Ovary (tissue), 10 donors: ENCODE measurements at regions of chr7 and their contacts with region 1.

Region 1: DNA sequence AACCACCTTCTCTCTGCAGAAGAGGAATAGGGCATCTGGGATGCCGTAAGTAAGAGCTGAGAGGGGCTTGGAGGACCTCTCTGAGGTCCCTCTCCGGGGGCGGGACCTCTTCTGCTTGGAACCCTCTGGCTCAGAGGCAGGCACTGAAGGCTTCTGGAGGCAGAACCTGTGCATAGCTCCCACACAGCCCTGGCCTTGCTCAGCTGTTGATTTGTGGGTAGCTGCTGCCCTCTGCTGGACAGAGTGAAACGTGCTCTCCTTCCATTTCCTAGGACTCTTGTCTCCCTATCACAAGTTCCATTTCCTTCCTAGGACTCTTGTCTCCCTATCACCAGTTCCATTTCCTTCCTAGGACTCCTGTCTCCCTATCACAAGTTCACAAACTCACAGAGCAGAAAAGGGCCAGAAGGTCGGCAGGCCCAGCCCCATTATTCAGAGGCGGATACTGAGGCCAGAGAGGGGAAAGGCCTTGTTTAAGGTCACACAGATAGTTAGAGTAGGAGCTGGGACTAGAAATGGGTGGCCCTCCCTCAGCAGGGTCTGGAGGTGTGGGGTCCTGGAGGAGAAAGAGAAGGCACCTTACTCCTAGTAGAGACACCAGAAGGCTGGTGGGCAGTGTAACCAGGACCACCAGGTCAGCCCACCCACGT is 30.3 kb upstream of the GARS1 start:
- DNase-seq: peak; percentile 74 to 88 (median 86)
- H3K4me3 ChIP-seq: no peak overlapping the region
- H3K27ac ChIP-seq: no peak overlapping the region
- H3K4me1 ChIP-seq: no peaks in the 10 kb centered on the region
- H3K27me3 ChIP-seq: no peaks in the 10 kb centered on the region
- CTCF ChIP-seq: peak; percentile 68 to 83 (median 78)
- EP300 ChIP-seq: no peak
- POLR2A ChIP-seq: no peak

Region 2: GRCh38 chr7:30270921-30271320 is 293.4 kb before region 1 on chr7:
- intact Hi-C with region 1: loop called (anchors 5 kb)
- DNase-seq: no peak
- H3K4me3 ChIP-seq: no peak overlapping the region
- H3K27ac ChIP-seq: no peak overlapping the region
- H3K4me1 ChIP-seq: no peaks in the 10 kb centered on the region
- H3K27me3 ChIP-seq: no peaks in the 10 kb centered on the region
- CTCF ChIP-seq: no peak
- EP300 ChIP-seq: no peak
- POLR2A ChIP-seq: no peak

Region 3: DNA sequence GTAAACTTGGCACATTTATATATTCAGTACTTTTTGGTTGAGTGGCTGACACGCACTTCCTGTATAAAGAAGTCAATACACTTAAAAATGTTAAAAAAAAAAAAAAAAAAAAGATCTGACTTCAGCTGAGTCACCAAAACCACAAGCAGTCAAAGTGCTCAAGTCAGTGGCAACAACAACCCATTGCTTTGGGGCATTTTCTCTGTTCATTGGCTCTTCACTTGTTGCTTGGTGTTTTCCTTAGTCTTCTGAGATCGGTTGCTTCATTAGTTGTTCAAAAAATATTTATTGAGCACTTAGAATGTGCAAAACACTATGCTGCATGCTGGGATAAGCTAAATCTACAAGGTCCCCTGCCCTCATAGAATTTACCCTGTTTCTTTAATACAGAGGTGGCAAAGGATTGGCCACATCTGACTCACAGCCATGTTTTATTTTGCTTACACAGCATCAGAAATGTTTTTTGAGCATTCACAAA is 216.2 kb before region 1 on chr7:
- intact Hi-C with region 1: no loop called
- DNase-seq: no peak
- H3K4me3 ChIP-seq: no peak overlapping the region
- H3K27ac ChIP-seq: no peak overlapping the region
- H3K4me1 ChIP-seq: no peaks in the 10 kb centered on the region
- H3K27me3 ChIP-seq: no peaks in the 10 kb centered on the region
- CTCF ChIP-seq: no peak
- EP300 ChIP-seq: no peak
- POLR2A ChIP-seq: no peak